PC-9 (cell line): ENCODE measurements at regions of chr7 and their contacts with region 1.

Region 1: GRCh38 chr7:102272075-102272917 is 14.4 kb upstream of the SH2B2 start:
- DNase-seq: peak in 1 of 2 experiments; percentile 86
- H3K4me3 ChIP-seq: no peak overlapping the region
- H3K27ac ChIP-seq: no peak overlapping the region
- H3K4me1 ChIP-seq: no peaks in the 10 kb centered on the region
- H3K27me3 ChIP-seq: no peaks in the 10 kb centered on the region
- CTCF ChIP-seq: peak; percentile 86

Region 2: GRCh38 chr7:101494602-101495329 is 777.5 kb before region 1 on chr7:
- CTCF ChIA-PET with region 1: interaction called, 11 read pairs
- POLR2A ChIA-PET with region 1: no interaction called
- intact Hi-C with region 1: no loop called
- DNase-seq: no peak
- H3K4me3 ChIP-seq: no peak overlapping the region
- H3K27ac ChIP-seq: no peak overlapping the region
- H3K4me1 ChIP-seq: no peaks in the 10 kb centered on the region
- H3K27me3 ChIP-seq: peaks cover 32% of the 10 kb centered on the region; the same call in 1 of the 2 replicates
- CTCF ChIP-seq: no peak

Region 3: GRCh38 chr7:101542527-101543241 is 729.6 kb before region 1 on chr7:
- CTCF ChIA-PET with region 1: interaction called, 8 read pairs
- POLR2A ChIA-PET with region 1: no interaction called
- intact Hi-C with region 1: loop called (anchors 1 kb)
- DNase-seq: peak in 1 of 2 experiments; percentile 77
- H3K4me3 ChIP-seq: no peak overlapping the region
- H3K27ac ChIP-seq: no peak overlapping the region
- H3K4me1 ChIP-seq: no peaks in the 10 kb centered on the region
- H3K27me3 ChIP-seq: no peaks in the 10 kb centered on the region
- CTCF ChIP-seq: peak; percentile 98

Region 4: GRCh38 chr7:102097584-102098161 is 174.6 kb before region 1 on chr7:
- CTCF ChIA-PET with region 1: interaction called, 12 read pairs
- POLR2A ChIA-PET with region 1: no interaction called
- intact Hi-C with region 1: no loop called
- DNase-seq: no peak
- H3K4me3 ChIP-seq: no peak overlapping the region
- H3K27ac ChIP-seq: no peak overlapping the region
- H3K4me1 ChIP-seq: 0 out of 2 replicates have a peak, but pooled peaks cover 6% of the 10 kb centered on the region
- H3K27me3 ChIP-seq: no peaks in the 10 kb centered on the region
- CTCF ChIP-seq: no peak